Activated naive CD4-positive, alpha-beta T cell treated with anti-CD3 and anti-CD28 coated beads for 36 hours (primary cell): ENCODE measurements at regions of chr2 and their contacts with region 1.

Region 1: GRCh38 chr2:156332534-156333273 is at the start of gene NR4A2:
- DNase-seq: peak; percentile 92
- H3K4me3 Mint-ChIP-seq: peak within 1 kb of the TSS; percentile 87
- H3K27ac Mint-ChIP-seq: peak within 1 kb of the TSS; percentile 95
- H3K4me1 Mint-ChIP-seq: peaks cover 45% of the 10 kb centered on the region
- H3K27me3 Mint-ChIP-seq: no peaks in the 10 kb centered on the region
- total RNA-seq, gene NR4A2: 29.7 to 32.9 TPM

Region 2: GRCh38 chr2:155377266-155377680 is 955.4 kb before region 1 on chr2:
- CTCF ChIA-PET with region 1: no interaction called
- intact Hi-C with region 1: loop called (anchors 2 kb)
- DNase-seq: no peak
- H3K4me3 Mint-ChIP-seq: no peak overlapping the region
- H3K27ac Mint-ChIP-seq: no peak overlapping the region
- H3K4me1 Mint-ChIP-seq: peaks cover 2% of the 10 kb centered on the region
- H3K27me3 Mint-ChIP-seq: peaks cover 2% of the 10 kb centered on the region

Region 3: GRCh38 chr2:156192468-156192867 is 140.2 kb before region 1 on chr2:
- CTCF ChIA-PET with region 1: no interaction called
- intact Hi-C with region 1: no loop called
- DNase-seq: peak; percentile 6
- H3K4me3 Mint-ChIP-seq: no peak overlapping the region
- H3K27ac Mint-ChIP-seq: no peak overlapping the region
- H3K4me1 Mint-ChIP-seq: no peaks in the 10 kb centered on the region
- H3K27me3 Mint-ChIP-seq: no peaks in the 10 kb centered on the region

Region 4: GRCh38 chr2:156400706-156401678 is 68.3 kb after region 1 on chr2:
- CTCF ChIA-PET with region 1: interaction called, 28 read pairs
- intact Hi-C with region 1: loop called (anchors 1 kb)
- DNase-seq: peak; percentile 85
- H3K4me3 Mint-ChIP-seq: peak overlapping the region; percentile 89
- H3K27ac Mint-ChIP-seq: peak overlapping the region; percentile 99
- H3K4me1 Mint-ChIP-seq: peaks cover 34% of the 10 kb centered on the region
- H3K27me3 Mint-ChIP-seq: peaks cover 5% of the 10 kb centered on the region

Region 5: DNA sequence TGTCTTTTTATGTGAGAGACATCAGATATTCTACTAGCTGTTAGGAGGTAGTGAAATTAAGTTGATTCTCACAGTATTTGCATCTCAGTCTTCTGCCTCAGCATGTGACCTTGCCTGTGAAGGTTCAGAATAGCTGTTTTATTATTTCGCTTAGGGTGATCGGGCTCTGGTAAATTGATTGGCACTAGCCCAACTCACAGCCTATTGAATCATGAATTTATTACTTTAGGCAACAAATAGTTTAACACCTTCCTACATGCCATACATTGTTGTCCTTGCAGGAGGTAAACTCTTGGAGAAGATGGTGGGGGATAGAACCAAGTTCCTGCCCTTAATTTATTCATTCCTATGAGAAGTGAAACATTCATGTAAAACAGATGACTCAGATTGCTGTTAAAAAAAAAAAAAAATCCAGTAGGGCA is 205.4 kb after region 1 on chr2:
- CTCF ChIA-PET with region 1: interaction called, 4 read pairs
- intact Hi-C with region 1: loop called (anchors 2 kb)
- DNase-seq: no peak
- H3K4me3 Mint-ChIP-seq: no peak overlapping the region
- H3K27ac Mint-ChIP-seq: no peak overlapping the region
- H3K4me1 Mint-ChIP-seq: peaks cover 39% of the 10 kb centered on the region
- H3K27me3 Mint-ChIP-seq: no peaks in the 10 kb centered on the region

Region 6: GRCh38 chr2:157194097-157194688 is 861.5 kb after region 1 on chr2:
- CTCF ChIA-PET with region 1: no interaction called
- intact Hi-C with region 1: loop called (anchors 5 kb)
- DNase-seq: peak; percentile 35
- H3K4me3 Mint-ChIP-seq: no peak overlapping the region
- H3K27ac Mint-ChIP-seq: no peak overlapping the region
- H3K4me1 Mint-ChIP-seq: no peaks in the 10 kb centered on the region
- H3K27me3 Mint-ChIP-seq: peaks cover 2% of the 10 kb centered on the region

Region 7: GRCh38 chr2:157628477-157629415 is 1296.0 kb after region 1 on chr2 and contains the start of gene ACVR1C:
- CTCF ChIA-PET with region 1: no interaction called
- intact Hi-C with region 1: loop called (anchors 5 kb)
- DNase-seq: peak; percentile 83
- H3K4me3 Mint-ChIP-seq: peak within 1 kb of the TSS; percentile 94
- H3K27ac Mint-ChIP-seq: no peak within 1 kb of the TSS
- H3K4me1 Mint-ChIP-seq: peaks cover 37% of the 10 kb centered on the region
- H3K27me3 Mint-ChIP-seq: peaks cover 2% of the 10 kb centered on the region
- total RNA-seq, gene ACVR1C: 3.5 to 3.6 TPM